Activated T-helper 1 cell treated with anti-CD3 and anti-CD28 coated beads, Interleukin-12 subunit alpha, Interleukin-12 subunit beta, Interleukin-2, Interleukin-4 antibody, amounts not matched to agents 30 ng/mL and 10 ng/mL and 1 ng/mL, durations not matched to agents 14 hours and 24 hours and 36 hours (primary cell): ENCODE measurements at regions of chr7 and their contacts with region 1.

Region 1: DNA sequence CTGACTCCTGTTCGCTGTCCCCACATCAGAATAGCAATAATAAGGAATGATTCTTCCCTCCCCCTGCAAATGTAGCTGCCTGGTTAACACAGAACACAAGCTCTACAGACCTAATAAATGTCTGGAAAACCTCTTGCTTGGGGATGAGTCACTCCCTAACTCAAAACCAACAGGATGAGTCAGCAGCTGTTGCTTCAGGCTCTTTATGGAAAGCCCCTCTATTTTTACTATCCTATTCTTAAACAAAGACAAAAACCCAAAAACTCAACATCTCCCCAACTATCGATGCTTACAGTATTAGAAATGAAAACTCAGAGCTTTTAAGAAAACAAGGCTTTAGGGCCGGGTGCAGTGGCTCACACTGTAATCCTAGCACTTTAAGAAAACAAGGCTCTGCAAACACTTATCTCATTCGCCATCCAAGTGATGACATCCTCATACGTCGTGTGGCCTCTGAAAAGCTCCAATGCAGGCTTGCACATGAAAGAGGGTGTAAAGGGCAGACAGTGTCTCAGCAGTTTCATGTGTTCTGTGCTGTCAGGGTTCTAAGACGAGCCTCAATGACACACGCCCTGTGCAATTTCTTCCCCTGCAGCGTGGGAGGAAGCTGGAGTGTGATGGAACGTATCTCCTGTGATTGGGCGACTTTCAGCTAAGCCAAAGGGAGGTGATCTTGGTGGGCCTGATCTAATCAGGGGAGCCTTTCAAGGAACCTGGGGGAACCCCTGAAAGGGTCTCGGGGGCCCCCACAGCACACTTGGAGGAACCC is 70.1 kb downstream of the AMZ1 start:
- DNase-seq: peak; percentile 72
- H3K4me3 Mint-ChIP-seq: peak overlapping the region; percentile 59
- H3K27ac Mint-ChIP-seq: peak overlapping the region; percentile 95
- H3K4me1 Mint-ChIP-seq: peaks cover 63% of the 10 kb centered on the region
- H3K27me3 Mint-ChIP-seq: no peaks in the 10 kb centered on the region

Region 2: GRCh38 chr7:2529161-2530070 is 228.7 kb before region 1 on chr7:
- intact Hi-C with region 1: loop called (anchors 5 kb)
- DNase-seq: peak; percentile 60
- H3K4me3 Mint-ChIP-seq: peak overlapping the region; percentile 74
- H3K27ac Mint-ChIP-seq: peak overlapping the region; percentile 97
- H3K4me1 Mint-ChIP-seq: peaks cover 34% of the 10 kb centered on the region
- H3K27me3 Mint-ChIP-seq: no peaks in the 10 kb centered on the region

Region 3: DNA sequence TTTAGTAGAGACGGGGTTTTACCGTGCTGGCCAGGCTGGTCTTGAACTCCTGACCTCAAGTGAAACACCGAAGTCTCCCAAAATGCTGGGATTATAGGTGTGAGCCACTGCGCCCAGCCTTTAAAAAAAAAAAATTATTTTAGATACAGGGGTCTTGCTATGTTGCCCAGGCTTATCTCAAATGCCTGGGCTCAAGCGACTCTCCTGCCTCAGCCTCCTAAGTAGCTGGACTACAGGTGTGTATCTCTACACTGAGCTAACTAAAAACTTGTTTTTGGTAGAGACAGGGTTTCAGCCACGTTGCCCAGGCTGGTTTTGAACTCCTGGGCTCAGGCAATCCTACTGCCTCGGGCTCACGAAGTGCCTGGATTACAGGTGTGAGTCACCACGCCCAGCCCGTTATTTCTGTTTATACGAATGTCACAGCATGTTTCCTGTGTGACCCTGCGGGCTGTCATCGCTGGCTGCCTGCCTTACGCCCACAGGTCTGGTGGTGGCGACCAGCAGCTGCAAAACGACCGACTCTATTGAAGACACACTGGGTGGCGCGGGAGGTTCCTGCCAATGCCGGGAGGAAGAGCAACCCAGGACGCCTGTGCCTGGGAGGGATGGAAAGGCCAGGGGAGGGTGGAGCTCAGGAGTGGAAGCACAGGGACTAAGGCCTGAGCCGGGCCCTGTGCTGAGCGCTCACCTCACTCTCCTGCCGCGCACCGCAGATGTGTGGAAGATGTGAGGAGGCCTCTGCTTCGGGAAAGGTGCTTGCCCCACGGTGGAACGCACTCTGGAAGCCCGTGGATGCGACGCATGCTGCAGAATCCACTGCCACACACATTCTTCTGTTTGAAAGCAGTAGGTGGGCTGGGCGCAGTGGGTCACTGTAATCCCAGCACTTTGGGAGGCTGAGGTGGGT is 37.3 kb before region 1 on chr7:
- intact Hi-C with region 1: loop called (anchors 1 kb)
- DNase-seq: peak; percentile 63
- H3K4me3 Mint-ChIP-seq: peak overlapping the region; percentile 34
- H3K27ac Mint-ChIP-seq: peak overlapping the region; percentile 65
- H3K4me1 Mint-ChIP-seq: peaks cover 49% of the 10 kb centered on the region
- H3K27me3 Mint-ChIP-seq: no peaks in the 10 kb centered on the region

Region 4: GRCh38 chr7:2781636-2782035 is 23.5 kb after region 1 on chr7:
- intact Hi-C with region 1: loop called (anchors 1 kb)
- DNase-seq: no peak
- H3K4me3 Mint-ChIP-seq: no peak overlapping the region
- H3K27ac Mint-ChIP-seq: no peak overlapping the region
- H3K4me1 Mint-ChIP-seq: peaks cover 43% of the 10 kb centered on the region
- H3K27me3 Mint-ChIP-seq: no peaks in the 10 kb centered on the region

Region 5: GRCh38 chr7:3042861-3043489 is 284.9 kb after region 1 on chr7:
- intact Hi-C with region 1: loop called (anchors 1 kb)
- DNase-seq: peak; percentile 65
- H3K4me3 Mint-ChIP-seq: peak overlapping the region; percentile 97
- H3K27ac Mint-ChIP-seq: peak overlapping the region; percentile 95
- H3K4me1 Mint-ChIP-seq: peaks cover 47% of the 10 kb centered on the region
- H3K27me3 Mint-ChIP-seq: no peaks in the 10 kb centered on the region